Left cardiac atrium (tissue), 4 donors: ENCODE measurements at regions of chr10 and their contacts with region 1.

Region 1: DNA sequence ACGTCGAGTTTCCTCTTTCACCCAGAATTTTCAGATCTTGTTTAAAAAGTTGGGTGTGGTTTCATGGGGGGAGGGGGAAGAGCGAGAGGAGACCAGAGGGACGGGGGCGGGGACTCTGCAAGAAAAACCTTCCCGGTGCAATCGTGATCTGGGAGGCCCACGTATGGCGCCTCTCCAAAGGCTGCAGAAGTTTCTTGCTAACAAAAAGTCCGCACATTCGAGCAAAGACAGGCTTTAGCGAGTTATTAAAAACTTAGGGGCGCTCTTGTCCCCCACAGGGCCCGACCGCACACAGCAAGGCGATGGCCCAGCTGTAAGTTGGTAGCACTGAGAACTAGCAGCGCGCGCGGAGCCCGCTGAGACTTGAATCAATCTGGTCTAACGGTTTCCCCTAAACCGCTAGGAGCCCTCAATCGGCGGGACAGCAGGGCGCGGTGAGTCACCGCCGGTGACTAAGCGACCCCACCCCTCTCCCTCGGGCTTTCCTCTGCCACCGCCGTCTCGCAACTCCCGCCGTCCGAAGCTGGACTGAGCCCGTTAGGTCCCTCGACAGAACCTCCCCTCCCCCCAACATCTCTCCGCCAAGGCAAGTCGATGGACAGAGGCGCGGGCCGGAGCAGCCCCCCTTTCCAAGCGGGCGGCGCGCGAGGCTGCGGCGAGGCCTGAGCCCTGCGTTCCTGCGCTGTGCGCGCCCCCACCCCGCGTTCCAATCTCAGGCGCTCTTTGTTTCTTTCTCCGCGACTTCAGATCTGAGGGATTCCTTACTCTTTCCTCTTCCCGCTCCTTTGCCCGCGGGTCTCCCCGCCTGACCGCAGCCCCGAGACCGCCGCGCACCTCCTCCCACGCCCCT is at the start of gene VIM:
- DNase-seq: peak; percentile 94
- ATAC-seq: peak; percentile 70 to 78
- total RNA-seq, gene VIM: 934 to 1,097 TPM

Region 2: DNA sequence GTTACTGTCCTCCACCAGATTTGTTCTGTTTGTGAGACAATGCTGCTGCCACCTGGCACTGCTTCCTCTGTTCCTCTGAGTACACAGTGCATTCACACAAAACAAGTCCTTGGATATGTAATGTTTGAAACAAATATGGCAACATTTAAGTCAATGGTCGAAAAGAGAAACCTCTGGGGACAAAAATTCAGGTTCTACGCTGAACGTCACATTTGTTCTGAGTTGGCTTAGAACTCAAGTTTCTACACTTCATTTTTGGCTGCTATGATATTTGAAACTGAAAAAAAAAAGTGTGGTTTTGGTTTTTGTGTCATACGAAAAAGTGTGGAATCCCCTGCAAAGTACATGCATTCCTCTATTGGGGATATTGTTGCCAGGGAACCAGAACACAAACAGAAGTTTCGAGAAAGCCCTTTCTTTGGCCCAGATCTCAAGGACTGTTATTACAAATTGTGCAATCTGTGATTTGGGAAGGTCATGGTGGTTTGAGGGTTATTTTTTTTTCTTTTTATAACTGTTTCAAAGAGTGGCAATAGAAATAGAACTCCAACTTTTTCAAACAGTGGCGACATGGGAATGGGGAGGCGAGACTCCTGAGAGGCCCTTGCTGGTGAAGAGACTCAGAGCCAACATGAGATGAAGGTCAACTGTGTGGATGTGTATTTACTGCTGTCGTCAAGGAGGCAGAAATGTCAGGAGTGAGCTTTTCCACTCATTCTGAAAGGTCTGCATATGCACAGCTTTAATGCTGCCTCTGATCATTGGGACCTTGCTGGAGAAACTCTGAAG is 226.2 kb before region 1 on chr10:
- intact Hi-C with region 1: loop called in 1 of 2 experiments (anchors 10 kb)
- DNase-seq: peak; percentile 41
- ATAC-seq: peak; percentile 81 to 86

Region 3: DNA sequence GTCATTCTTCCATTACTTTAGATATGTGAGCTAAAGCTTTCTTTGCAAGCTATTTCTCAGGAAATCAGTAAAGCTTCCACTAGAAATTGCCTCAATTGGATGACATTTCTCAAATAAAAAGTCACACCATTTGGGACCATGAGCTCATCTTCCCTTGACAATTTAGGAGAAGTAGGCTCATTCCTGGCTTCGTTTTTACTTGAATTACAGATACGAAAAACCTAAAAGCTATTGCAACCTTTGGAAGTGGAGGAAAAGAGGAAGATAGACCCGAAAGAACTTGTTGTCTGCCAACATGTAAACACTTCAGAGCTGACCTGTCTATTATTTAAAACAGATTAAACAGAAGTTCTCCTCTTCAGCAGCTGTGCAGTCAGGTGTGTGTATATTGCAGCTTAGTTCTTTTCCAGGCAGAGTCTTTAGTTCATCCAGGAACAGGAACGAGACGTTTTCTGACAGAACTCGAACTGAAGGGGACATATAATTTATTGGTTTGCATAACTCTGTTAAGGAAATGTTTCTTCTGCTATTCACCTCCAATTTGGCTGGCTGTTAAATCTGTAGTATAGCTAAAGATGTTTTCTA is 269.2 kb after region 1 on chr10:
- intact Hi-C with region 1: no loop called
- DNase-seq: no peak
- ATAC-seq: no peak